HCT116 (cell line): ENCODE measurements at regions of chr18 and their contacts with region 1.

Region 1: DNA sequence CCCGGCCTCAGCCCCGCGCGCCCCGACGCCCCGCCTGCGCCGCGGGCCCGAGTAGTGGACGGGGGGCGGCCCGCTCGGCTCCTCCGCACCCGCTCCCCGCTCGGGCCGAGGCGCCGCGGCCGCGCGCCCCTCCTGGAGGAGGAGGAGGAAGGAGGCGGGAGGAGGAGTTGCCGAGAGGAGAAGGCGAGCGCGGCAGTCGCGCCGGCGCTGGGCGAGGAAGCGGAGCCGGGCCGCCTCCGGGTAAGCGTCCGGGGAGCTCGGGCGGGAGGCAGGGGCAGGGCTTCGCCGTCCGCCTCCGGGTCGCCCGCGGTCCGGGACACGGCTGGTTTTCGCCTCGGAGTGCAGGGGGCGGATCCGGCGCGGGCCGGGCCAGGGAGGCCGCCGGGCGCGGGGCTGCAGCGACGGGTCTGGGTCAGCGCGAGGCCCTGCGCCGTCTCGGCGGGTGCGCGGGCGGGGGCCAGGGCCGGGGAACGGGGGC is at the start of gene SOCS6:
- DNase-seq: no peak
- ATAC-seq: peak; percentile 37
- H3K4me3 ChIP-seq: peak within 1 kb of the TSS; percentile 75 to 86
- H3K27ac ChIP-seq: peak within 1 kb of the TSS; percentile 99
- H3K4me1 ChIP-seq: peaks cover 59 to 78% of the 10 kb centered on the region in 2 experiments
- H3K27me3 ChIP-seq: no peaks in the 10 kb centered on the region
- CTCF ChIP-seq: no peak
- POLR2A ChIP-seq: peak; percentile 53
- RAD21 ChIP-seq: no peak
- total RNA-seq, gene SOCS6: 53.4 TPM

Region 2: DNA sequence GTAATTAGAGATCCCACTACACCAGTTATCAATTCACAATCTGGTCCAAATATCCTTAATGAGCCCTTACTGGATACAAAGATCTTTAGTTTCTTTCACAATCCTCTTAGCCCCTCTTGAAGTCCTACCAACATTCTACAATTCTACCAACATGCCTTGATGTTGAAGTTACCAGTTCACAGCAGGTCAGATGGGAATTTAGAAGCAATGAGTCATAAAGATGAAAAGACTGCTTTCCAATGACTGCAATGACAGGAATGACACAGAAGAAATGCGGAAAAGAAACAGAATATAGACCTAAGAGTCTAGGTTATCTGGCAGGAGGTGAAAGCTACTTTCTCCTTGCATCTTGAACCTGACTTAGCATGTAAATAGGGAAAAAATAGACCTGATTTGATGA is 107.9 kb before region 1 on chr18:
- CTCF ChIA-PET with region 1: no interaction called
- POLR2A ChIA-PET with region 1: interaction called, 3 read pairs
- RAD21 ChIA-PET with region 1: no interaction called
- intact Hi-C with region 1: loop called (anchors 5 kb)
- DNase-seq: peak; percentile 94
- ATAC-seq: peak; percentile 88
- H3K4me3 ChIP-seq: peak overlapping the region in 1 of 2 experiments; percentile 25; a peak in 2 of 4 replicates
- H3K27ac ChIP-seq: peak overlapping the region; percentile 97
- H3K4me1 ChIP-seq: peaks cover 55 to 65% of the 10 kb centered on the region in 2 experiments
- H3K27me3 ChIP-seq: no peaks in the 10 kb centered on the region
- CTCF ChIP-seq: no peak
- POLR2A ChIP-seq: no peak
- RAD21 ChIP-seq: 0 out of 2 replicates have a peak, but pooled peaks have one; percentile 31

Region 3: DNA sequence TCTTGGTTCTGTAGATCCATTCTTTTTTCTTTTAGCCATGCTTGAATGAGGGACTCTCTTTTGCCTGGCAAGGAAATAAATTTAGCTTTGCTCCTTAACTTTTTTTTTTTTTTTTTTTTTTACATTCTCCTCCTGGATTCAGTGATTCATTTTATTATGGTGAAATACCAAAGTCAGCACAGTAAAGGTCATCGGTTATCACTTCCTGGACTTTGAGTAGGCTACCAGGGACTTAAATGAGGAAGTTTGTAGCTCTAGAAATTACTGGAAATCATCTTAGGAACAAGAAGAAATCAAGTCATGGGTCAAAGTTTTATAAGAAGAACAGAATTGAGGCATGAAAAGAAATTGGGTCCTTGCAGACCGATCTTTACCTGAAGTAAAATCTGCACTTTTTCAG is 75.0 kb after region 1 on chr18:
- CTCF ChIA-PET with region 1: no interaction called
- POLR2A ChIA-PET with region 1: no interaction called
- RAD21 ChIA-PET with region 1: no interaction called
- intact Hi-C with region 1: loop called (anchors 2 kb)
- DNase-seq: peak; percentile 72
- ATAC-seq: peak; percentile 61
- H3K4me3 ChIP-seq: peak overlapping the region in 1 of 2 experiments; percentile 11; a peak in 1 of 4 replicates
- H3K27ac ChIP-seq: peak overlapping the region; percentile 97
- H3K4me1 ChIP-seq: peaks cover 89 to 97% of the 10 kb centered on the region in 2 experiments
- H3K27me3 ChIP-seq: no peaks in the 10 kb centered on the region
- CTCF ChIP-seq: no peak
- POLR2A ChIP-seq: no peak
- RAD21 ChIP-seq: no peak

Region 4: GRCh38 chr18:70384181-70384790 is 95.4 kb after region 1 on chr18:
- CTCF ChIA-PET with region 1: no interaction called
- POLR2A ChIA-PET with region 1: interaction called, 5 read pairs
- RAD21 ChIA-PET with region 1: no interaction called
- intact Hi-C with region 1: loop called (anchors 2 kb)
- DNase-seq: peak; percentile 92
- ATAC-seq: peak; percentile 80
- H3K4me3 ChIP-seq: peak overlapping the region; percentile 42 to 53
- H3K27ac ChIP-seq: peak overlapping the region; percentile 99
- H3K4me1 ChIP-seq: peaks cover 46 to 74% of the 10 kb centered on the region in 2 experiments
- H3K27me3 ChIP-seq: no peaks in the 10 kb centered on the region
- CTCF ChIP-seq: no peak
- POLR2A ChIP-seq: no peak
- RAD21 ChIP-seq: no peak

Region 5: DNA sequence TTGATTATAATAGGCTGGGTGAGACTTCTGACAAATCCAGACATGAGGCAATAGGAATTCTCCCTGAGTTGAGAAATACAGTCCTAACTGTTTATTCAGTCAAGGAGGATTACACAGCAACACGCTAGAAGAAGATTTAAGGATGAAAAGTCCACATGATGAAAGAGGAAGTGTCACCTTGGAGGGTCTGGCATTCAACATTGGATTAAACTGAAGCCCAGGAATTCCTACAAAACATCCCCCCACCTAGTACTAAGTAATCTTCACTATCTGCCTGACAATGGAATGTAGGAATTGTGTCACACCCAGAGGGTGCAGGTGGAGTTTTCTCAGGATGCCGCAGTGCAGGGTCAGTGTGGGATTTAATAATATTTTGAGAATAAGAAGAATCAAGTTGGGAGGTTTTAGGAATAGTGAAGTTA is 142.3 kb after region 1 on chr18:
- CTCF ChIA-PET with region 1: no interaction called
- POLR2A ChIA-PET with region 1: no interaction called
- RAD21 ChIA-PET with region 1: interaction called in 1 of 2 experiments, 3 read pairs
- intact Hi-C with region 1: loop called (anchors 2 kb)
- DNase-seq: no peak
- ATAC-seq: no peak
- H3K4me3 ChIP-seq: no peak overlapping the region
- H3K27ac ChIP-seq: peak overlapping the region; percentile 38
- H3K4me1 ChIP-seq: peaks cover 24 to 42% of the 10 kb centered on the region in 2 experiments
- H3K27me3 ChIP-seq: no peaks in the 10 kb centered on the region
- CTCF ChIP-seq: no peak
- POLR2A ChIP-seq: no peak
- RAD21 ChIP-seq: no peak